ENCODE measurements at regions of chr3 and their contacts with region 1.

Region 1: GRCh38 chr3:115783938-115784738 is 160.8 kb downstream of the GAP43 start:
- DNase-seq: peak; percentile 90
- ATAC-seq: peak; percentile 80
- H3K4me3 ChIP-seq: peak overlapping the region; percentile 65
- H3K27ac ChIP-seq: peak overlapping the region; percentile 96
- H3K4me1 ChIP-seq: peaks cover 34% of the 10 kb centered on the region
- H3K27me3 ChIP-seq: no peaks in the 10 kb centered on the region
- CTCF ChIP-seq: peak; percentile 96

Region 2: DNA sequence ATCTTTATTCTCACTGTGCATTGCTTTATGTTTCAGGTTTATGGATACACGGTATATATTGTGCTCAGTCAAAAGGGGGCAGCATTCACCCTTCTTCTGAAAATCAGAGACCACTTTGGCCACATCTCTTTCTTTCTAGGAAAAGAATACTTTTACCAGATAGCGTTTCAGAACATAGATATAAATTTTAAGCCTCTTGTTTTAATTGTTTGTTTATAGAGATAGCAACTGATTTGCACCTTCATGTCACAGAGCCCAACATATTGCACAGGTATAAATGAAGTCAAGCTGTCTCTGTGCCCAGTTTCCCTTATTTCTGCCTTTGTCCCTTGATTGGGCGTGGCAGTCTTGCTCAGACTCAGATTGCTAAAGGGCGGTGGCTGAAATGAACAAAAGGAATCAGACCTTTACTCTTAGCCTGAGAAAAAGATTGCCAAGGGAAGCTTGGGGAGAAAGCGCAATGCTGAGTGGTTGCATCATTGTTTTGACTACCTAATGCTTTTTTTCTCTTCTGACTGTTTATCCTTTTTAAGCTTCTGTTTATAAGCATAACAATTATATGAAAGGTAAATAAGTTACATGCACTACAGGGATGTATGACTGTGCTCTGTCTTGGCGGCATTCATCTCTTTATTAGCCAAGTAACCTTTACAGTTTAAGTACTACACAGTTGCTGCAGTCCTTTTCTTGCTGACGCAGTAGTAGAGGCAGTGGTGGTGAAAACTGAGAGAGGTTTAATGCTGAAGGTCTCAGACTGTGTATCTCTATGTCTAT is 566.3 kb before region 1 on chr3:
- CTCF ChIA-PET with region 1: interaction called, 12 read pairs
- POLR2A ChIA-PET with region 1: no interaction called
- intact Hi-C with region 1: loop called (anchors 1 kb)
- DNase-seq: peak; percentile 72
- ATAC-seq: peak; percentile 86
- H3K4me3 ChIP-seq: no peak overlapping the region; the same call in 1 of the 2 replicates
- H3K27ac ChIP-seq: peak overlapping the region; percentile 17
- H3K4me1 ChIP-seq: peaks cover 10% of the 10 kb centered on the region; the same call in 1 of the 2 replicates
- H3K27me3 ChIP-seq: no peaks in the 10 kb centered on the region
- CTCF ChIP-seq: peak; percentile 95

Region 3: DNA sequence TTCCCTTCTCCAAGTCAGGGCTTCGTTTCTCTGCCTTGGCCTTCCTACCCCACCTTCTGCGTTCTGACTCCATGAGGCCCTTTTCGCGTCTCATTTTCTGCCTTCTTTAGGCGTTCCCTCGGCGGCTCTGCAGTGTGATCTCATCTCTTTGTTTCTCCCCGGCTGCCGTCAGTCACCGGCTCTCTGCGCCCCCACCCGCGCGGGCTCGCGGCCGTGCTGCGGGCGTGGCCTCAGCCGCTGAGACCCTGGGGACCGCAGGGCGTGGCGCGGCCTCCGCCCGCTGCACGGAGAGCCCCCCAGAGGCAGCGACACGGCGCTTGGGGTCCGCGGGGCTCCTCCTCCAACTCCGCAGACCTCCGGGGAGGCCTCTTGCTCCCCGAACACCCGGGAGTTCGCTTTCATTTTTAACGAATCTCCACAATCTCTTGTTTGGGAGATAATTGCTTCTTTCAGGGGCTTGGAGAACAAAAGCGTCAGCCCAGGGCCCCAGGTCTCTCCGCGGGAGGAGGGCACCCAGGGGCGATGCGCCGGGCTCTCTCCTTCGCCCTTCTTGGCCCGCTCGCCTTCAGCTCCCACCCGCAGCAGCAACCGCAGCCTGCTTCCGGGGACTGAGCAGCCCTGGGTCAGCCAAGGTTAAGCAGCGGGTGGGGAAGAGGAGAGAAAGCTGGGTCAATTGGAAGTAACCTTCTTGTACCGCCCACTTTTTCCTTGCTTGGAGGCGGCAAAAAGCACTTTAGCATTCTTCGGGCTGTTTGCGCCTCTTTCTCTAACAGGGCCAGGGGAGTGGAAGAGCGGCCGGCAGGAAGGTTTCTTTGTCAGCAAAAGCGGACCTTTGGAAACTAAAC is 125.6 kb before region 1 on chr3:
- CTCF ChIA-PET with region 1: no interaction called
- POLR2A ChIA-PET with region 1: no interaction called
- intact Hi-C with region 1: loop called (anchors 1 kb)
- DNase-seq: peak; percentile 66
- ATAC-seq: peak; percentile 90
- H3K4me3 ChIP-seq: peak overlapping the region; percentile 80
- H3K27ac ChIP-seq: no peak overlapping the region
- H3K4me1 ChIP-seq: peaks cover 5% of the 10 kb centered on the region
- H3K27me3 ChIP-seq: peaks cover 37% of the 10 kb centered on the region
- CTCF ChIP-seq: no peak

Region 4: DNA sequence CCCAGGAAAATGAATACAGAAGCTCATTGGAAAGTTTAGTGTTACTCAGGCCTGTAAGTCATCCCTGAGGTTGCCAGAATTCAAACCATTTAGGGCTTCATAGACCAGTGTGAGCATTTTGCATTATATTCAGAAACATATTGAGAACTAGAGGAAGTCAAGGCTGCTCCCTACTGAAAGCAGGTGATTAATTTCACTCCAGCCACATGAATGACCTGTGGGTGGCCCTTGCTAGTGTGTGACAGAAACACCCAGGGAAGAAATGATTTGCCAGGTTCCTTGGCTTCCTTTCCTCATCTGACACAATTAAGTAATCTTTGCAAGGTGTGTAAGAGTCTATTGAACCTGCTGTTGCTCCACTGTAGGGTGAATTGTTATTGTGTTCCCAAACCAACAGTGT is 99.0 kb before region 1 on chr3:
- CTCF ChIA-PET with region 1: no interaction called
- POLR2A ChIA-PET with region 1: no interaction called
- intact Hi-C with region 1: no loop called
- DNase-seq: no peak
- ATAC-seq: no peak
- H3K4me3 ChIP-seq: no peak overlapping the region
- H3K27ac ChIP-seq: no peak overlapping the region
- H3K4me1 ChIP-seq: no peaks in the 10 kb centered on the region
- H3K27me3 ChIP-seq: peaks cover 26% of the 10 kb centered on the region
- CTCF ChIP-seq: no peak

Region 5: DNA sequence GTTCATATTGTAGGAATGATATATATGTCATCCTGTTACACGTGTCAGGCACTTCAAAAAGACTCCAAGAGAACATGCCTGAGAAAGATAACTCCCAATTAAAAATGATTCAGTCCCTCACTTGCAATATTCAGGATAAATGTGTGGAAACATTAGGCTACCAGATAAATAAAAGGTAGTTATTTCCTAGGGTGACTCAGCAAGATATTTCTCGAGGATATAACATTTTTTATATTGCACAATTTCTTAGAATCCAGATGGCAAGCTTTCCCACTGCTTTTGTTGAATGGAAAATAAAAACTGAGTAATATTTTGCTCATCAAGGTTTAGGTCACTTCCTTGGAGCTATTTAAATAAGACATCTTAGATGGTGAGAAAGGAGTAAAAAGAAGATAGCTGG is 20.6 kb after region 1 on chr3:
- CTCF ChIA-PET with region 1: interaction called, 17 read pairs
- POLR2A ChIA-PET with region 1: interaction called, 20 read pairs
- intact Hi-C with region 1: loop called (anchors 1 kb)
- DNase-seq: peak; percentile 96
- ATAC-seq: peak; percentile 62
- H3K4me3 ChIP-seq: peak overlapping the region; percentile 31; the same call in 1 of the 2 replicates
- H3K27ac ChIP-seq: peak overlapping the region; percentile 98
- H3K4me1 ChIP-seq: peaks cover 63% of the 10 kb centered on the region
- H3K27me3 ChIP-seq: no peaks in the 10 kb centered on the region
- CTCF ChIP-seq: no peak